GM12878 (cell line): ENCODE measurements at regions of chr7 and their contacts with region 1.

Region 1: GRCh38 chr7:91636129-91636724 is 244.3 kb downstream of the MTERF1 start:
- DNase-seq: no peak
- ATAC-seq: peak; percentile 74
- H3K4me3 ChIP-seq: no peak overlapping the region
- H3K27ac ChIP-seq: no peak overlapping the region
- H3K4me1 ChIP-seq: no peaks in the 10 kb centered on the region
- H3K27me3 ChIP-seq: no peaks in the 10 kb centered on the region
- CTCF ChIP-seq: peak; percentile 43 to 62 (median 49); a peak in 5 of 6 replicates
- EP300 ChIP-seq: no peak
- POLR2A ChIP-seq: no peak
- RAD21 ChIP-seq: peak; percentile 72

Region 2: DNA sequence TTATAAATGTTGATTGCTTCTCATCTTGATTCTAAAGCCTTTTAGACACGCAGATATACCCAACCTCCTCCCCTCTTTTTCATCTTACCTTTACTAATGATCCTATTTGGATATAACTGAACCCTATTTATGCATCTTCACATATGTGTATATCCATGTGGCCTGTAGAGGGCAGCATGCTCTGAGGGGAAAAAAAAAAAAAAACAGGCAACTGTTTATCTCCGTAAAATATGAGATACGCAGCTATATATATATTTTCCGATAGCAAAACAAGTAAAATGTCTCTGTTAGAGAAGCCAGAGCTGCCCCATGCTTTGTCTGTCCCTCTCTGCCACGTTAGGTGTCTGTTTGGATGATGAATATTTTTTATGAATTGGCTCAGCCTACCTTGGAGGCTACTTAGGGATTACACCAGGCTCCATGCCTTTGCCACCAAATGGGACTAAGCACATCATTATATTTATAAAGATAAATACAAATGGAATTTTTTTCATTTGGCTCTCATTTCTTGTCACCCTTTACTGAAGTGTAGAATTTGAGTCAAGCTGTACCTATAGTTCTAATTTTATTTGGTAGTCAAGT is 546.8 kb before region 1 on chr7:
- CTCF ChIA-PET with region 1: interaction called, 5 read pairs
- POLR2A ChIA-PET with region 1: no interaction called
- RAD21 ChIA-PET with region 1: no interaction called
- SMC1A ChIA-PET with region 1: no interaction called
- in situ Hi-C with region 1: loop called (anchors 5 kb)
- intact Hi-C with region 1: loop called (anchors 1 kb)
- DNase-seq: no peak
- ATAC-seq: peak; percentile 82
- H3K4me3 ChIP-seq: no peak overlapping the region
- H3K27ac ChIP-seq: no peak overlapping the region
- H3K4me1 ChIP-seq: no peaks in the 10 kb centered on the region
- H3K27me3 ChIP-seq: no peaks in the 10 kb centered on the region
- CTCF ChIP-seq: peak; percentile 59 to 70 (median 67)
- EP300 ChIP-seq: no peak
- POLR2A ChIP-seq: no peak
- RAD21 ChIP-seq: peak; percentile 64

Region 3: GRCh38 chr7:91288208-91288824 is 347.9 kb before region 1 on chr7:
- CTCF ChIA-PET with region 1: interaction called, 3 read pairs
- POLR2A ChIA-PET with region 1: no interaction called
- RAD21 ChIA-PET with region 1: no interaction called
- SMC1A ChIA-PET with region 1: no interaction called
- in situ Hi-C with region 1: no loop called
- intact Hi-C with region 1: loop called (anchors 1 kb)
- DNase-seq: no peak
- ATAC-seq: peak; percentile 73
- H3K4me3 ChIP-seq: no peak overlapping the region
- H3K27ac ChIP-seq: no peak overlapping the region
- H3K4me1 ChIP-seq: no peaks in the 10 kb centered on the region
- H3K27me3 ChIP-seq: no peaks in the 10 kb centered on the region; a peak in 1 of 4 replicates
- CTCF ChIP-seq: peak; percentile 42 to 61 (median 58); a peak in 5 of 6 replicates
- EP300 ChIP-seq: no peak
- POLR2A ChIP-seq: no peak
- RAD21 ChIP-seq: peak; percentile 28; the same call in 1 of the 2 replicates